CD4-positive, alpha-beta T cell (primary cell): ENCODE measurements at regions of chr9 and their contacts with region 1.

Region 1: GRCh38 chr9:5832543-5833529 is at the start of gene ERMP1:
- DNase-seq: peak; percentile 81 to 95 (median 90)
- ATAC-seq: peak; percentile 88
- H3K4me3 ChIP-seq: peak within 1 kb of the TSS; percentile 80
- H3K4me3 Mint-ChIP-seq: peak within 1 kb of the TSS; percentile 99
- H3K27ac ChIP-seq: peak within 1 kb of the TSS in 1 of 2 donors; percentile 36
- H3K27ac Mint-ChIP-seq: peak within 1 kb of the TSS; percentile 85
- H3K4me1 ChIP-seq: peaks cover 26% of the 10 kb centered on the region
- H3K4me1 Mint-ChIP-seq: peaks cover 53% of the 10 kb centered on the region
- H3K27me3 ChIP-seq: no peaks in the 10 kb centered on the region
- H3K27me3 Mint-ChIP-seq: no peaks in the 10 kb centered on the region
- CTCF ChIP-seq: peak; percentile 89
- total RNA-seq, gene ERMP1: 5.8 to 6.8 TPM

Region 2: GRCh38 chr9:5450359-5451091 is 382.3 kb before region 1 on chr9 and contains the start of gene CD274:
- CTCF ChIA-PET with region 1: interaction called, 7 read pairs
- POLR2A ChIA-PET with region 1: no interaction called
- intact Hi-C with region 1: loop called in 1 of 2 experiments (anchors 10 kb)
- DNase-seq: peak; percentile 57 to 92 (median 70)
- ATAC-seq: peak; percentile 94
- H3K4me3 ChIP-seq: peak within 1 kb of the TSS; percentile 69
- H3K4me3 Mint-ChIP-seq: peak within 1 kb of the TSS; percentile 88
- H3K27ac ChIP-seq: peak within 1 kb of the TSS; percentile 77 to 87
- H3K27ac Mint-ChIP-seq: peak within 1 kb of the TSS; percentile 95
- H3K4me1 ChIP-seq: peaks cover 34% of the 10 kb centered on the region
- H3K4me1 Mint-ChIP-seq: peaks cover 74% of the 10 kb centered on the region
- H3K27me3 ChIP-seq: no peaks in the 10 kb centered on the region
- H3K27me3 Mint-ChIP-seq: no peaks in the 10 kb centered on the region
- CTCF ChIP-seq: peak; percentile 76
- total RNA-seq, gene CD274: 5.3 to 6.3 TPM

Region 3: GRCh38 chr9:5843794-5844504 is 11.1 kb after region 1 on chr9:
- CTCF ChIA-PET with region 1: interaction called, 54 read pairs
- POLR2A ChIA-PET with region 1: interaction called, 65 read pairs
- intact Hi-C with region 1: no loop called
- DNase-seq: peak in 2 of 14 experiments; percentile 13 to 28
- ATAC-seq: peak; percentile 11
- H3K4me3 ChIP-seq: peak overlapping the region; percentile 15
- H3K4me3 Mint-ChIP-seq: peak overlapping the region; percentile 59
- H3K27ac ChIP-seq: peak overlapping the region in 1 of 2 donors; percentile 54
- H3K27ac Mint-ChIP-seq: peak overlapping the region; percentile 77
- H3K4me1 ChIP-seq: peaks cover 58% of the 10 kb centered on the region
- H3K4me1 Mint-ChIP-seq: peaks cover 66% of the 10 kb centered on the region
- H3K27me3 ChIP-seq: no peaks in the 10 kb centered on the region
- H3K27me3 Mint-ChIP-seq: no peaks in the 10 kb centered on the region
- CTCF ChIP-seq: no peak

Region 4: DNA sequence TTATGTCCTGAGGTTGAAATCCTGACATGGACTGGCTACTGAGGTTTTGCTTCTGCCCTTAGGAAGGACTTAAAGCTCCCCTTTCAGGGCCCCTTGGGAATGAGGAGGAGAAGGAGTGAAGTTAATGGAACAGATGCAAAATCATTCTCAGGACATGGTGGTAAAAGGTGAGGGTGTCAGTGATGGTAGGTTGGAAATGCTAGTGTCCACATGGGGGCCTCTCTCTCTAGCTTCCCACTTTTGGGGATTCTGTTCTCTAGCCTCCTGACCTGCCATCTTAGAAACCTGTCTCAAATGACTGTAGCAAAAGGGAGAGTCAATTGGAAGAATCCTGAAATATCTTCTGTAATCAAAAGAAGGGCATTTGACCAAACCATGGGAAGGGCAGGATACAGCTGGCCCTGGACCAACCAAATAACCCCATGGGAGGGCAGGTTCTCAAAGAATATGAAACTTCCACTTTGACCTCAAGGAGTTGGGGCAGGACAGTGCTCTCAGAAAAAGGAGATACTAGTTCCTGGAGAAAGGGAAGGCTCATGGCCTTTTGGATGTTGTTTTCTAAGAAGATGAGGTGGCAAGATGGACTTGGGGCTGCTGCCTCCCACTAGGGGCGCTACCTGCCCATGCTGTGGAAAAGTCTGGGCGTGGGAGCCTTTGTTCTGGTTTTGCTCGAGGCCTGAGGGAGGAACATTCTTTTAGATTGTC is 36.6 kb after region 1 on chr9:
- CTCF ChIA-PET with region 1: interaction called, 9 read pairs
- POLR2A ChIA-PET with region 1: no interaction called
- intact Hi-C with region 1: loop called in 1 of 2 experiments (anchors 5 kb)
- DNase-seq: peak in 7 of 14 experiments; percentile 5 to 38 (median 21)
- ATAC-seq: no peak
- H3K4me3 ChIP-seq: no peak overlapping the region
- H3K4me3 Mint-ChIP-seq: no peak overlapping the region
- H3K27ac ChIP-seq: no peak overlapping the region
- H3K27ac Mint-ChIP-seq: no peak overlapping the region
- H3K4me1 ChIP-seq: peaks cover 5% of the 10 kb centered on the region
- H3K4me1 Mint-ChIP-seq: peaks cover 5% of the 10 kb centered on the region
- H3K27me3 ChIP-seq: no peaks in the 10 kb centered on the region
- H3K27me3 Mint-ChIP-seq: no peaks in the 10 kb centered on the region
- CTCF ChIP-seq: no peak

Region 5: GRCh38 chr9:6008169-6008979 is 175.5 kb after region 1 on chr9:
- CTCF ChIA-PET with region 1: no interaction called
- POLR2A ChIA-PET with region 1: interaction called, 5 read pairs
- intact Hi-C with region 1: loop called in 1 of 2 experiments (anchors 5 kb)
- DNase-seq: peak; percentile 88 to 99 (median 92)
- ATAC-seq: peak; percentile 70
- H3K4me3 ChIP-seq: peak overlapping the region; percentile 87
- H3K4me3 Mint-ChIP-seq: peak overlapping the region; percentile 91
- H3K27ac ChIP-seq: peak overlapping the region; percentile 91 to 95
- H3K27ac Mint-ChIP-seq: peak overlapping the region; percentile 97
- H3K4me1 ChIP-seq: peaks cover 11% of the 10 kb centered on the region
- H3K4me1 Mint-ChIP-seq: peaks cover 70% of the 10 kb centered on the region
- H3K27me3 ChIP-seq: no peaks in the 10 kb centered on the region
- H3K27me3 Mint-ChIP-seq: no peaks in the 10 kb centered on the region
- CTCF ChIP-seq: no peak